ENCODE measurements at regions of chr12 and their contacts with region 1.

Region 1: DNA sequence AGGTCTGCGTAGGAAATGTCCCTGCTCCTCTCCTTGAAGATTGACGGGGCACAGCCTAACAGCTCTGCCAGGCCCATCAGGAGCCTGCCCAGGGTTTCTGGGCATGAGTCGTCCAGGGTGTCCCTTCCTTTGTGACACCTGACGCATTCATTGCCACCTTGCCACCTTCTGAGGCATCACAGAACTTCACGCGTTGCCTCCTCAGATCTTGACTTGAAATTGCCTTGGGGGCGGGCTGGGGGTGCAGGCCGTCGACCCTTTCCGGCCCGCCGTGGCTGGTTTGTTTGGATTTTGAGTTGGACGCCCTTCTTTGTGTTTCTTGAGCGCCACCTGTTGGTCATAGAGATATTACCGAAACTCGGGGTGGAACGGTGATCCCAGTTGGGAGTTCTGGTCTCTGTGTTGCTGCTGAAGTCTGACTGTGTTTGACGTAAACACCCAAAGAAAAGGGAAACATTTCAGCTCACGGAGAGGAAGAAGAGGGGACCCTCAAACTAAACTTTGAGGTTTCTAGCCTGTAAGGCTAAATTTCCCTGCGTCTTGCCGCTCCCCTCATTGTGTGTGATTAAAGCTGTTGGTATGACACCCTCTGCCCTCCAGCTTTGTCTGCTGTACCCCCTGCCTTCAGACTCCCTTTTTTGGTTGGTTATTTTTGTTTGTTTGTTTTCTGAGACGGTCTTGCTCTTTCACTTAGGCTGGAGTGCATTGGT is 44.6 kb downstream of the MLXIP start:
- DNase-seq: peak; percentile 82
- ATAC-seq: peak; percentile 65
- H3K4me3 ChIP-seq: no peak overlapping the region
- H3K4me3 Mint-ChIP-seq: no peak overlapping the region
- H3K27ac ChIP-seq: no peak overlapping the region
- H3K27ac Mint-ChIP-seq: peak overlapping the region; percentile 62
- H3K4me1 ChIP-seq: peaks cover 7 to 10% of the 10 kb centered on the region in 2 donors
- H3K4me1 Mint-ChIP-seq: peaks cover 21% of the 10 kb centered on the region
- H3K27me3 ChIP-seq: no peaks in the 10 kb centered on the region
- H3K27me3 Mint-ChIP-seq: no peaks in the 10 kb centered on the region
- CTCF ChIP-seq: peak; percentile 85

Region 2: GRCh38 chr12:121729021-121729420 is 394.2 kb before region 1 on chr12:
- CTCF ChIA-PET with region 1: no interaction called
- POLR2A ChIA-PET with region 1: no interaction called
- intact Hi-C with region 1: no loop called
- DNase-seq: no peak
- ATAC-seq: no peak
- H3K4me3 ChIP-seq: no peak overlapping the region
- H3K4me3 Mint-ChIP-seq: no peak overlapping the region
- H3K27ac ChIP-seq: no peak overlapping the region
- H3K27ac Mint-ChIP-seq: no peak overlapping the region
- H3K4me1 ChIP-seq: no peaks in the 10 kb centered on the region
- H3K4me1 Mint-ChIP-seq: no peaks in the 10 kb centered on the region
- H3K27me3 ChIP-seq: no peaks in the 10 kb centered on the region
- H3K27me3 Mint-ChIP-seq: no peaks in the 10 kb centered on the region
- CTCF ChIP-seq: no peak

Region 3: DNA sequence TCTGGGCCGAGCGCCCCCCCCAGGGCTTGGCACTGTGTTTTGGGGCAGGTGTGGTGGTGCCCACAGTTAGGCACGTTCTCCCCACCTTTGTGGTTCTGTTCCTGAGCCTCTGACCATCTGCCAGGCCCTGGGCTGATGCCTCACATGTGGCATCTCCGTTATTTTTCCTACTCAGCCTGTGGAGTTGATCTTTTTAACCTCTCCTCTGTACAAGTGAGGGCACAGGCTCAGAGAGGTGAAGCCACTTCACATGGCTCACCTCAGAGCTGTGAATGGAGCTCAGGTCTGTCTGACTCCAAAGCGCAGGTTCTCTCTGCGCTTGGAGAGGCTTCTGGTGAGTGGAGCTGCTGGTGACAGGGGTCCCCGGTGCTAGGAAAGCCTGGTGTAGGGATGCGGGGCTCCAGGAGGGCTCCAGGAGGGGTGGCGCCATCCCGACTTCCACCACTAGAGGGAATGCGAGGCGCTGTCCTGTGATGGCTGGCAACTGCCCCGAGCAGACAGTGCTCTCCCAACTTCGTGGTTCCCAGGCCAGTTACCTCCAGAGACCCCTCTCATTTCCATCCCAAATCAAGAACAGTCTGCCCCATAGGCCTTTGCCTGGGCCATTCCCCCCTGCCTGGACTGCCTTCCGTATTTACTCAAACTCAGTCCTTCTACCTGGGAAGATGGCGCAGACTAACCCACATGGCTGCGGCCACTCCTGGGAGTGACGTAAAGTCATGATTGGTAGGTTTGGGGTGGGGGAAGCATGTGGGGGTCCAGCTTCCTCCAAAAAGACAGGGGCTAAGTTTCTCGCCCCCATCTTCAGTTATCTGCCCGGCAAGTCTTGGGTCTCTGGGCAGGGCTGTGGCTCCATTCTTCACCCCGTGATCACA is 91.6 kb before region 1 on chr12:
- CTCF ChIA-PET with region 1: interaction called, 18 read pairs
- POLR2A ChIA-PET with region 1: no interaction called
- intact Hi-C with region 1: no loop called
- DNase-seq: peak; percentile 70
- ATAC-seq: peak; percentile 39
- H3K4me3 ChIP-seq: no peak overlapping the region
- H3K4me3 Mint-ChIP-seq: peak overlapping the region; percentile 29
- H3K27ac ChIP-seq: peak overlapping the region; percentile 18 to 70
- H3K27ac Mint-ChIP-seq: peak overlapping the region; percentile 71
- H3K4me1 ChIP-seq: peaks cover 51 to 67% of the 10 kb centered on the region in 2 donors
- H3K4me1 Mint-ChIP-seq: peaks cover 61% of the 10 kb centered on the region
- H3K27me3 ChIP-seq: no peaks in the 10 kb centered on the region
- H3K27me3 Mint-ChIP-seq: no peaks in the 10 kb centered on the region
- CTCF ChIP-seq: peak; percentile 81

Region 4: GRCh38 chr12:122064025-122064777 is 59.0 kb before region 1 on chr12:
- CTCF ChIA-PET with region 1: interaction called, 48 read pairs
- POLR2A ChIA-PET with region 1: interaction called, 4 read pairs
- intact Hi-C with region 1: loop called (anchors 1 kb)
- DNase-seq: peak; percentile 58
- ATAC-seq: peak; percentile 66
- H3K4me3 ChIP-seq: no peak overlapping the region
- H3K4me3 Mint-ChIP-seq: no peak overlapping the region
- H3K27ac ChIP-seq: no peak overlapping the region
- H3K27ac Mint-ChIP-seq: peak overlapping the region; percentile 65
- H3K4me1 ChIP-seq: peaks cover 30 to 49% of the 10 kb centered on the region in 2 donors
- H3K4me1 Mint-ChIP-seq: peaks cover 47% of the 10 kb centered on the region
- H3K27me3 ChIP-seq: no peaks in the 10 kb centered on the region
- H3K27me3 Mint-ChIP-seq: no peaks in the 10 kb centered on the region
- CTCF ChIP-seq: no peak

Region 5: DNA sequence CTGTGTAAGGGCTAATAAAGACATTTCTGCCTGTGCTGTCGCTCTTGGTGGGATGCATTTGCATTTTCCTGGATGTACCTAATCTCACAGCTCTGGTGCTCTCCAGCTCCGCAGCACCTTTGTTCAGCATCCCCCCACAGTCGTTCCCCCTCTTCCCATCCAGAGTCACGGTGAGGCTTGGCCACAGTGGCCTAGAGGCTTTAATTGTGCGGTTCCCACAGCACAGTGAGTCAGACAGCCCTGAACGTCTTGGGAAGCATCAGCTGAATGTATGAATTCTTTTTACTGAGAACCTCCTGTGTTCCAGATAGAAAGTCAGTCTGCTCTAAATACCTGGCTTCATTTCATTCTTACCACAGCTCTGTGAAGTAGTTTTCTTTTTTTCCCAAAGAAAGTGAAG is 15.9 kb before region 1 on chr12:
- CTCF ChIA-PET with region 1: interaction called, 19 read pairs
- POLR2A ChIA-PET with region 1: no interaction called
- intact Hi-C with region 1: no loop called
- DNase-seq: no peak
- ATAC-seq: no peak
- H3K4me3 ChIP-seq: no peak overlapping the region
- H3K4me3 Mint-ChIP-seq: no peak overlapping the region
- H3K27ac ChIP-seq: no peak overlapping the region
- H3K27ac Mint-ChIP-seq: no peak overlapping the region
- H3K4me1 ChIP-seq: peaks cover 25 to 28% of the 10 kb centered on the region in 2 donors
- H3K4me1 Mint-ChIP-seq: peaks cover 57% of the 10 kb centered on the region
- H3K27me3 ChIP-seq: no peaks in the 10 kb centered on the region
- H3K27me3 Mint-ChIP-seq: no peaks in the 10 kb centered on the region
- CTCF ChIP-seq: no peak

Region 6: DNA sequence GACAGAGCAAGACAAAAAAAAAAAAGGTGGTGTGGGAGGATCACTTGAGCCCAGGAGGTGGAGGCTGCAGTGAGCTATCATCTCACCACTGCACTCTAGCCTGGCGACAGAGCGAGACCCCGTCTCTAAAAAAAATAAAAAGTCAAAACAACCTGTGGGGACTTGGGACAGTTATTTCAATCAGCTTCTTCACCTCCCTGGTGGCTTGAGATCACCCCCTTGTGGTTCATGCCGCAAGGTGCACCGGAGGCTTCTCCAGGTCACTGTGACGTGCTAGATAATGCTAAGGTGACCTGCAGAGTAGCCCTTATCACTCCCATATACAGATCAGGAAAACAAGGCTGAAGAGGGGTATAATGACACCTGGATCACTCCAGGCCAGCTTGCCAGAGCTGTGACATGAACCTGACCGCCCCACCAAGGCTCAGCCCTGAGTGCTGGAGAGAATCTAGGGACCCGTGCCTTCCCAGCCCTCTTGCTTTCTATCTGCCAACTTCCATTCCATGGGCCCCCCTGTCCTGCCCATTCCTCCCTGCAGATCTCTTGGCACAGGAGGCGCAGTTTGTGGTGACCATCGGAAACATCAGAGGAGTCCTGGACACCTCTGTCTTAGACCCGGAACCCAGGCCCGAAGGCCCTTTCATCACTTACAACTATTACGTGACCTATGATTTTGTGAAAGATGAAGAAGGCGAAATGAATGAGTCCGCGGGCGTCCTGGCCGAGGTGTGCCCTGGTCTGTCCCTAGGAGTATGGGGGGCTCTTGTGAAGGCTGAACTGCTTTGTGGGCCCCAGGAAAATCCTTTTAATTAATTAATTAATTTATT is 67.8 kb after region 1 on chr12:
- CTCF ChIA-PET with region 1: interaction called, 16 read pairs
- POLR2A ChIA-PET with region 1: no interaction called
- intact Hi-C with region 1: loop called (anchors 2 kb)
- DNase-seq: peak; percentile 72
- ATAC-seq: peak; percentile 95
- H3K4me3 ChIP-seq: no peak overlapping the region
- H3K4me3 Mint-ChIP-seq: no peak overlapping the region
- H3K27ac ChIP-seq: no peak overlapping the region
- H3K27ac Mint-ChIP-seq: no peak overlapping the region
- H3K4me1 ChIP-seq: no peaks in the 10 kb centered on the region
- H3K4me1 Mint-ChIP-seq: peaks cover 2% of the 10 kb centered on the region
- H3K27me3 ChIP-seq: peaks cover 0 to 4% (median 0%) of the 10 kb centered on the region in 4 experiments
- H3K27me3 Mint-ChIP-seq: peaks cover 16% of the 10 kb centered on the region
- CTCF ChIP-seq: peak; percentile 75

Region 7: GRCh38 chr12:122336015-122336946 is 213.1 kb after region 1 on chr12:
- CTCF ChIA-PET with region 1: no interaction called
- POLR2A ChIA-PET with region 1: no interaction called
- intact Hi-C with region 1: no loop called
- DNase-seq: peak; percentile 50
- ATAC-seq: no peak
- H3K4me3 ChIP-seq: no peak overlapping the region
- H3K4me3 Mint-ChIP-seq: no peak overlapping the region
- H3K27ac ChIP-seq: peak overlapping the region in 1 of 2 donors; percentile 19
- H3K27ac Mint-ChIP-seq: no peak overlapping the region
- H3K4me1 ChIP-seq: no peaks in the 10 kb centered on the region
- H3K4me1 Mint-ChIP-seq: no peaks in the 10 kb centered on the region
- H3K27me3 ChIP-seq: no peaks in the 10 kb centered on the region
- H3K27me3 Mint-ChIP-seq: no peaks in the 10 kb centered on the region
- CTCF ChIP-seq: peak; percentile 78